OCI-LY7 (cell line): ENCODE measurements at regions of chr6 and their contacts with region 1.

Region 1: GRCh38 chr6:90514496-90514895 is 72.4 kb downstream of the MAP3K7 start:
- DNase-seq: no peak
- H3K4me3 ChIP-seq: no peak overlapping the region
- H3K27ac ChIP-seq: no peak overlapping the region
- H3K4me1 ChIP-seq: no peaks in the 10 kb centered on the region
- CTCF ChIP-seq: no peak

Region 2: DNA sequence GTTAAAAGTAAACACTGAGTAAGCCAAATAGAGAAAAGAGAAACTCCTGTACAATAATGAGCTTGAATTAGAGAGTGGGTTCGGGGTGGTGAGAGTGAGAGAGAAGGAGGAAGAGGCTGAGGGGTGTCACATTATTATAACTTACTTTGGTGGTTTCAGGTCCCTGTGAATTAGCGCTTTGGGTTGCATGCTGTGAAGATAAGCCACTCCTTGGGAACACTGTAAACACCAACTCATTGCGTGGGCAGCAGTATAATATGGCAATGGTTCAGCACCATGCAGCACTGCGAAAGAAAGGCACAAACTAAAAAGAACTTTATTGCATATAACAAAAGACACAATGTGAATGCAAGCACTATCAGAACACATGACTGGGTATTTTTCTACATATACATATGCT is 45.4 kb after region 1 on chr6:
- CTCF ChIA-PET with region 1: no interaction called
- POLR2A ChIA-PET with region 1: no interaction called
- intact Hi-C with region 1: loop called (anchors 5 kb)
- DNase-seq: no peak
- H3K4me3 ChIP-seq: no peak overlapping the region
- H3K27ac ChIP-seq: no peak overlapping the region
- H3K4me1 ChIP-seq: no peaks in the 10 kb centered on the region
- CTCF ChIP-seq: no peak